ENCODE measurements at regions of chr11 and their contacts with region 1.

Region 1: DNA sequence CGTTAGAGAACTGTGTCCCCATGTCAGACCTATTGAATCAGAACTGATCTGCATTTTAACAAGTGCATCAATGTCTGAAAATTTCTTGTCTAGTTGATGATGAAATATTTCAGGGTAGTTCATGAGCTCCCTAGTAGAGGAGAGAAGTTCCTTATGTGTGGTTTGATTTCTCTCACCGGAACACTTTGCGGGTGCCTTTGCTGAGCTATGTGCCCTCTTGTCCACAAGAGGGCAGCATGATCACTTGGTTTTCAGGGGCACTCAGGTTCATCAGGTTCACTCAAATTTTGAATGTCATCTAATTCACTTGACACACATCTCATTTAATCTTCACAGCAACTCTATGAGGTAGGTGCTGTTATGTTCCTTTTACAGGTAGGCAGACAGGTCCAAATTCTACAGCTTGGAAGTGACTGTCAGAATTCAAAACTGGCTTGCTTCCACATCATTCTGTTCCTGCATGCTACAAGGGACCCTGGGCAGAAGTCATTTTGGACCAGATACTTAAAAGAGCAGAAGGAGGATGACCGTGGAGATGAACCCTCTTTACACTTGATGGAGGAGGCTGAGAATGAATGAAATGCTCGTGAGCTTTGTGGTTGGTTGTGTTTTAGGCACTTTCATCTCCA is 55.6 kb downstream of the P4HA3 start:
- DNase-seq: peak; percentile 68
- H3K4me3 Mint-ChIP-seq: no peak overlapping the region
- H3K27ac Mint-ChIP-seq: no peak overlapping the region
- H3K4me1 Mint-ChIP-seq: peaks cover 3% of the 10 kb centered on the region
- H3K27me3 Mint-ChIP-seq: no peaks in the 10 kb centered on the region

Region 2: DNA sequence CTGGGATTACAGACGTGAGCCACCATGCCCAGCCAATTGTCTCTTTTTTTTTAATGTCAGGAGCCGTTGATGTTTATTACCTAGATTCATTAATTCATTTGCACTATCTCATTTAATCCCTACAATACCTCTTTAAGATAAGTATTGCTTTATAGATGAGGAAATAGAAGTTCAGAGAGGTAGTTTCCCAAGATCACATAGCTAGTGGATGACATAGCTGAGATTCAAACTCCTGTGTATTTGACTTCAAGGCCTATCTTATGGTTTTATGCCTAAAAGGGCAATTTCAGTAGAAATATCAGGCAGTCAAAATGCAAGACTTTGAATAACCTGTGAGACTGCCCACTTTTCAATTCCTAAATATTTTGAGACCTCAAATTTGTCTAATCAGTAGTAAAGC is 18.3 kb before region 1 on chr11:
- CTCF ChIA-PET with region 1: interaction called, 11 read pairs
- intact Hi-C with region 1: no loop called
- DNase-seq: no peak
- H3K4me3 Mint-ChIP-seq: no peak overlapping the region
- H3K27ac Mint-ChIP-seq: no peak overlapping the region
- H3K4me1 Mint-ChIP-seq: peaks cover 22% of the 10 kb centered on the region
- H3K27me3 Mint-ChIP-seq: no peaks in the 10 kb centered on the region

Region 3: DNA sequence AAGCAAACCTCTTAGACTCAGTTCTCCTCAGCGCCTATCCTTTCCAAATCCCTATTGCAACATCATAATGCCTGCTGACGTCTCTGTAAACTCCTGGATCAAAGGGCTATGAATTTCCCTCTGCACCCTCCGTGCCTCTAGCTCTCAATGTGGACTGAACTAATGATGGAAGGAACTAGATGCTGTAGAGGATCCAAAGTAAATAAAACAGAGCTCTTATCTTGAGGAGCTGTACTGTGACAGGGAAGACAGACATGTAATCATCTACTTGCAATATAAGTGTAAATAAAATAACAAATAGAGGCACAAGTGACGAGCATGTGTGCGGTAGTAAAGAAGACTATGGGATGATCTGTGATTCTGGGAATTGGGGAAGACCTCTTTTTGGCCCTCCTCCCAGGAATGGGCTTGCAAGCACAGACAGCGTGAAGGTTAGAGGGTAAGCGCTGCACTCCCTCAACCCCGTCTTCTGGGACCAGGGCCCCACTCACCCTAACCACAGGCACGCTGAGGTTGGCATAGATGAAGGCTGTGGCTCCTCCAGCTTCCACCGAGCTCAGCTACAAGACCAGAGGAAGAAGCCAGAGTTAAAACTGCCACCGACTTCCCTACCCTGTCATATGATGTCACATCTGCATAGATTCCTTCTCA is 13.4 kb after region 1 on chr11:
- CTCF ChIA-PET with region 1: interaction called, 14 read pairs
- intact Hi-C with region 1: no loop called
- DNase-seq: peak; percentile 45
- H3K4me3 Mint-ChIP-seq: no peak overlapping the region
- H3K27ac Mint-ChIP-seq: no peak overlapping the region
- H3K4me1 Mint-ChIP-seq: peaks cover 20% of the 10 kb centered on the region
- H3K27me3 Mint-ChIP-seq: no peaks in the 10 kb centered on the region

Region 4: DNA sequence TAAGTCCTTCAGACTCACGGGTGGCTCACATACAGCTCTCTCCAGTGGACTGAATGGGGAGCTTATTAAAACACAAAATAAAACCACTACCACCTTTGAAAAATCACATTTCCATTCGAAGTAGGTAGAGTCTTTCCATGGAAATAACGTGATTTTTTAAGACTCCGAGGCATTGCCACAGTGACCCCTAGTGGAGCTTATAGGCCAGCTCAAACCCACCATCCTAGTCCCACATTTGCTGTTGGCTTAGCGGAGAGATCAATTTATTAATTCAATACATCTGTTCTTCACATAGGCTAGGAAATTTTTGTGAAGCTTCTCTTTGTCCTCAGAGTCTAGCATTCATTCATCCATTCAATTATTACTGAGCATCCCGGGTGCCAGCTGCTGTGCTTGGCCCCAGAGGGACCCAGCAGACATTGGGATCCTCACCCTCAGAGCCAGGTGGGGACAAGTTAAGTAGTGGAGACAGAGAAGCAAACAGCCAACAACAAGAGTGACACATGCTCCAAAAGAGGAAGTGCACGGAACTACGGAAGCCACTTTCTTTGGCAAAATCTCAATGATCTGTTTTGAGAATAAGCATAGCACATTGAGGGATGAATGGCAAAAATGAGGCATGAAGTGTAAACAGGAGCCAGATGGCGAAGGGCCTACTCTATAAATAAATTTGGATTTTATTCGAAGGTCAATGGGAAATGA is 65.8 kb after region 1 on chr11:
- CTCF ChIA-PET with region 1: interaction called, 64 read pairs
- intact Hi-C with region 1: loop called (anchors 1 kb)
- DNase-seq: peak; percentile 56
- H3K4me3 Mint-ChIP-seq: no peak overlapping the region
- H3K27ac Mint-ChIP-seq: no peak overlapping the region
- H3K4me1 Mint-ChIP-seq: no peaks in the 10 kb centered on the region
- H3K27me3 Mint-ChIP-seq: peaks cover 4% of the 10 kb centered on the region

Region 5: DNA sequence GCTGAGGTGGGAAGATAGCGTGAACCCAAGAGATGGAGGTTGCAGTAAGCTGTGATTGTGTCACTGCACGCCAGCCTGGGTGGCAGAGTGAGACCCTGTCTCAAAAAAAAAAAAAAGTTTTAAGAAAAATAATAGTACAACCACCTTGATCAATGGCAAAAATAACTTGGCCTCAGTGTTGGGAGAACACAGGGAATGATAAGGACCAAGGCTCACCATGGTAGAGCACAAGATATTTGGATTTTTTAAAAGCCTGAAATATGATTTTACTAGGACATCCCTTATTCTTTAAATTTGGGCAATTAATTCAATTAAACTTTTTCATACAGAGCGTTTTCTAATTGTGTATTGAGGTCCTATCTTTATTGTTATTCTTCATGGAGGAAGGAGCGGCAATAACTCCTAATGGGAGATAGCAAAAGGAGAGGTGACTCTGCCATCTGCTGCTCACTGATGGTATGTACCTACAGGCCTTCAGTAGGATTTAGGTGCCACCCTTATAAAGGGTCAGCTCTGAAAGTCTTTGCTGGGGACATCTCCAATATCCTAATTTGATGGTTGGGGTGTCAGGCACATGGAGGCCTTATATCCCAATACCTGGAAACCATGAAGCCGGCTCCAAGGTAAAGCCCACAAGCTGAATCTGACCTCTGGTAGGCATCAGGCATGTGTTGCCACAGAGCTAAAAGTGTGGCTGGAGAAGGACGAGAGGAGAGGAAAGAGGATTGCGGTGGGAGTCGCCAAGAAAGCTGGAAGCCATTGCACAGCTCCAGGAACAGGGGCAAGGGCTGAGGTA is 314.6 kb after region 1 on chr11:
- CTCF ChIA-PET with region 1: interaction called, 10 read pairs
- intact Hi-C with region 1: loop called (anchors 1 kb)
- DNase-seq: peak; percentile 55
- H3K4me3 Mint-ChIP-seq: no peak overlapping the region
- H3K27ac Mint-ChIP-seq: no peak overlapping the region
- H3K4me1 Mint-ChIP-seq: no peaks in the 10 kb centered on the region
- H3K27me3 Mint-ChIP-seq: no peaks in the 10 kb centered on the region

Measured in activated naive CD4-positive, alpha-beta T cell treated with anti-CD3 and anti-CD28 coated beads for 36 hours (primary cell).